Natural killer cell (primary cell): ENCODE measurements at regions of chr1 and their contacts with region 1.

Region 1: GRCh38 chr1:199684686-199685273 is 342.7 kb upstream of the NR5A2 start:
- DNase-seq: peak in 1 of 2 donors; percentile 62
- ATAC-seq: peak; percentile 52 to 79 (median 68)
- H3K4me3 ChIP-seq: no peak overlapping the region
- H3K4me3 Mint-ChIP-seq: no peak overlapping the region
- H3K27ac ChIP-seq: no peak overlapping the region
- H3K27ac Mint-ChIP-seq: no peak overlapping the region
- H3K4me1 ChIP-seq: no peaks in the 10 kb centered on the region
- H3K4me1 Mint-ChIP-seq: no peaks in the 10 kb centered on the region
- H3K27me3 ChIP-seq: no peaks in the 10 kb centered on the region
- H3K27me3 Mint-ChIP-seq: peaks cover 16 to 17% of the 10 kb centered on the region in 2 donors
- CTCF ChIP-seq: peak; percentile 55

Region 2: DNA sequence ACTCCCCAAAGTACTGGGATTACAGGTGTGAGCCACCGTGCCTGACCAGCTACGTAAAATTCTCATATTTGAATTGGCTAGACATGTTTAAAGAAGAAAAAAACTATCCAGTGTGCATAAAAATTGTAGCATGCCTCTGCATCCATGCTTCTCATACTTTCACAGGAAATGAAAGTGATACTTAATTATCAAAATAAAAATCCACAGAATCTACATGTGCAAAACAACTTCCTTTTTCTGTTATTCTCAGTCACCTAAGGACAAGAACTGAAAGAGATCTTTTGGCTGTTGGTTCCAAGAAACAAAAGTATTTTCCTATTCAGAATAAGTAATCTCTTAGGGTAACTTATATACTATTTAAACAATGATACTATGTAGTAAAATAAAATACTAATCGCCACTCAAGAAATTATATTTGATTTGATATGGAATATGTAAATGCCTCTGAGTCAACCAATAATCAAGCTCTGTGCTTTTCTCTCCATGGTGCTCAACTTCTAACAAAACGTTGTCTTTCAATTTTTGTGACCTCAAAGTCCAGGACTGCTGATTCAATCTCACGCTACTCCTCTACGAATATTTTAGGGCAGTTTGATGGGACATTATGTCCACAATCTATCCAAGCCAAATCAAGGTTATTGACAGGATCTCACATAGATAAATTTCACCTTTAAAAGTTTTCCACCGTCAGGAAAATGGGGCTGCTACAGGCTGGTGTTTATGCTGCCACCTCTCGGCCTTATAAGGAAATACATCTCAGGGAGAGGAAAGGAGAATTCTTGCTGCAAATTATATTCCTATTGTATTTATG is 622.4 kb after region 1 on chr1:
- intact Hi-C with region 1: loop called (anchors 5 kb)
- DNase-seq: peak in 1 of 2 donors; percentile 80
- ATAC-seq: peak; percentile 63 to 72 (median 70)
- H3K4me3 ChIP-seq: no peak overlapping the region
- H3K4me3 Mint-ChIP-seq: peak overlapping the region; percentile 61
- H3K27ac ChIP-seq: no peak overlapping the region
- H3K27ac Mint-ChIP-seq: no peak overlapping the region
- H3K4me1 ChIP-seq: peaks cover 8% of the 10 kb centered on the region
- H3K4me1 Mint-ChIP-seq: peaks cover 9 to 12% of the 10 kb centered on the region in 2 donors
- H3K27me3 ChIP-seq: no peaks in the 10 kb centered on the region
- H3K27me3 Mint-ChIP-seq: peaks cover 0 to 8% of the 10 kb centered on the region in 2 donors
- CTCF ChIP-seq: peak; percentile 92

Region 3: GRCh38 chr1:200510228-200510623 is 825.4 kb after region 1 on chr1:
- intact Hi-C with region 1: loop called (anchors 5 kb)
- DNase-seq: peak; percentile 37 to 85
- ATAC-seq: peak; percentile 82 to 96 (median 87)
- H3K4me3 ChIP-seq: no peak overlapping the region
- H3K4me3 Mint-ChIP-seq: no peak overlapping the region
- H3K27ac ChIP-seq: no peak overlapping the region
- H3K27ac Mint-ChIP-seq: no peak overlapping the region
- H3K4me1 ChIP-seq: no peaks in the 10 kb centered on the region
- H3K4me1 Mint-ChIP-seq: no peaks in the 10 kb centered on the region
- H3K27me3 ChIP-seq: no peaks in the 10 kb centered on the region
- H3K27me3 Mint-ChIP-seq: peaks cover 14 to 29% of the 10 kb centered on the region in 2 donors
- CTCF ChIP-seq: peak; percentile 96